Psoas muscle (tissue), 8 donors: ENCODE measurements at regions of chr13 and their contacts with region 1.

Region 1: DNA sequence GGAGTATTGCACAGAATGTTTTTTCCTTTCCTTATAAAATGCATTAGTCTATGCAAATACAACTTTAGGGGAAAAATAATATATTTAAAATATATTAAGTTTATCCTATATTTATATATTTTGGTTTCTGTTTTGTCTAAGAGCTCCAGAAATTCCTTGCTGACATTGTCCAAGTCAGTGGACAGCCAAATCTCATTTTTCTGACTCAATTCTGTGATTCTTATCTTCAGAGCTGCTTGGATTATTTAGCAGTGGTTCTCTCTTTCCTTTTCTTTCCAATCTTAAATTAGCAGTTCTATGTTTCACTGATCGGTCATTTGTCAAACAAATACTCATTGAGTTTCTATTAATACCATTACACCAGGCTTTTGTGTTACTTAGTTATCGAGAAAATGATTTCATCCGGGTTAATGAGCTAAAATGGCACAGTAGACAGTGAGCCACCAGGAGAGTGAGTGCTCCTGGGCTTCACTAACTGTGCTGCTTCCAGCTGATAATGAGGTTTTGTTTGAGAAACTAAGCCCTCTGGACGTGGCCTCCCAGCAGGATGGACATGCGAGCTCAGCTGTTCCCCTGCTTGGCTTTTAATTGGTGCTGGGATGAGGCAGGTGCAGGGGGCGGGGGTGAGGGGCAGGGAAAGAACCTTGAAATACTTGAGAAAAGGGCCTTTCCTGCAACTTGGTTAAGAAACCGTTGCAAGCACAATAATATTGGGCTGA is 44.0 kb downstream of the ATP11A start:
- DNase-seq: no peak
- ATAC-seq: no peak
- H3K4me3 ChIP-seq: no peak overlapping the region
- H3K27ac ChIP-seq: no peak overlapping the region
- H3K4me1 ChIP-seq: peaks cover 16% of the 10 kb centered on the region
- H3K27me3 ChIP-seq: no peaks in the 10 kb centered on the region
- CTCF ChIP-seq: no peak

Region 2: GRCh38 chr13:112767506-112768471 is 34.0 kb after region 1 on chr13:
- intact Hi-C with region 1: loop called in 1 of 2 experiments (anchors 5 kb)
- DNase-seq: peak in 1 of 2 donors; percentile 54
- ATAC-seq: no peak
- H3K4me3 ChIP-seq: no peak overlapping the region
- H3K27ac ChIP-seq: no peak overlapping the region
- H3K4me1 ChIP-seq: peaks cover 15% of the 10 kb centered on the region
- H3K27me3 ChIP-seq: no peaks in the 10 kb centered on the region
- CTCF ChIP-seq: no peak